Posterior cingulate gyrus (tissue), 11 donors: ENCODE measurements at regions of chr6 and their contacts with region 1.

Region 1: DNA sequence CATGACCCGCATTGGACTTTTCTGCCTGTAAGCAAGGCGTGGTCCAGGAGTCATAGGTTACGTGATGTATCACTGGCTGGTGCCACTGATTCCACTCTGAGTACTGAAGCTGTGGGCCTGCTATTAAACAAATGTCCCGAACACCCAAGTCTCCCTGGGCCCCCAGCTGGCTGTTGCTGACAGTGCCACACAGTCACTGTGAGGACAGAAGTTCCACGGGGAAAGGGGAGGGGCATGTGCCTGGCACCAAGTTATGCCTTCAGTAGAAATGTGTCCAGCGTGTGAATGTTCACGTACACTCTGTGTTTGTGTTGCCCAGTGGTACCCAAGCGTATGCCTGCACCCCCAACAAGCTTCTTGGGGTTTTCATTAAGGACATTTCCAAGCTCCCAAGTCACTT is 171.4 kb upstream of the QKI start:
- DNase-seq: peak; percentile 71 to 98 (median 83)

Region 2: DNA sequence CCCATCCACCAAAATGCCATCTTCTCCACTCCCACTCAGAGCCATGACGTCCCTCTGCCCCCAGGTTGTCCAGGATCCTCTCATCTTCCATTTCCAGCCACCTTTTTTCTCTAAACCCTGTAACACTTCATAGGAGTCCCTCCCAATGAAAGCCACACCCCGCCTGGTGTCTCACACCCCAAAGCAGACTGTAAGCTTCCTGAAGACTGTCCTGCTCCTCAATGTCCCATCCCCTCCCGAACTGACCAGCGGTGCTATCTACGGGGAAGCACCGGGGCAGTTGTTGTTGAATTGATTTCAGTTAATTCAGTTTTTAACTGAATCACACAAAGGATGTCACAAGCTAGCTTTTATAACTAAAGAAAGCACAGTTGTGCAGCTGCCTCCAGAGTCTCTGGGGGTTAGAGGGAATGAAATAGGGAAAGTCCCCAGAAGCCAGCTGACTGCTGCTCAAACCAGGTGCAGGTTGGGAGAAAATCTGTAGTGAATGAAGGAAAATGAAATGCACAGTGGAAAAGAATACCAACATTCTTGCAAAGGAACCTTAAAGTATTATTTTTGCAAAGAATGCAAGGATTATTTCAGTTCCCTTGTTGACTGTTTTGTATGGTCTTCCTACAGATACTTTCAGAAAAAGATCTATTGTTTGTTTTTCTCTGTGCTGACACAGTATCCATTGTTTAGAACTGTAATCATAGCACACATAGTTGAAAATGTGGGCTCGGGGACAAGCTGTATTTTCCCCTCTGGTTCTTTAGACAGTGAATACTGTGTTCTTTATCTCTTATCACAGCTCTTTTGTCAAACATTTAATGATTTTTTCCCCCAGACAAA is 51.2 kb before region 1 on chr6:
- intact Hi-C with region 1: loop called (anchors 2 kb)
- DNase-seq: peak in 2 of 10 donors; percentile 21 to 45